ENCODE measurements at regions of chr12 and their contacts with region 1.

Region 1: DNA sequence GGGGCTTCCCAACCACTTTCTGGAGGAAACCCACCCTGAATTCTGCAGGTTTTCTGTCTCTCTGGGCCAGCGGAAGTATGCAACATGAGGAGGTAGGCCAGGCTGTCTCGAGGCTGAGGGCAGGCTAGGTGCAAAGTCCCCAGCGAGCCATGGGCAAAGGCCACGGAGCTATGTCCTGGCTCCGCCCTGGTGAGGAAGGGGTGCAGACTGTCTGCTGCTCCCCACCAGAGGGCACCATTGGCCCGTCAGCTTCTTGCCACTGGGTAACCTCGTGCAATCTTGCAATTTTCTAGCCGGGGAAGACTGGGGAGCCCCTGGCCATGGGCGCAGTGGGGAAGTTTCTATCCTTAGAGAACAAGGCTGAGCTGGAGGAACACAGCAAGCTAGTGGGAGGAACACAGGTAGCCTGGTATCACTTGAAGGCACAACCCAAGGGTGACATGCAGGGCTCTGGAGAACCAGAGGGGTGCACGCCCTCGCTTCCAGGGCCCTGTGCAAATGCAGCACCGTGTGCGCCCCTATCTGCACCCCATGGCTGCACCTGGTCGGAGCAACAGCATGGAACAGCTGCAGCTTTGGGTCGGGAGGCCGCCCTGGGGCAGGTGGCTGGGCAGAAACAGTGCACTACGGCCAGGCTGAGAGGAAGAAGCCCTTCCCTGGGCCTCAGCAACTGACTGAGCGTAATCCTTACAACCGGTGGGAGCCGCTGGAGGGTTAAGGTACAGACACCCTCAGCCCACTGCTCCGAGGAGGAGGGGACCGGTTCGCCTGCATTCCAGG is 27.6 kb upstream of the RPLP0 start:
- DNase-seq: peak; percentile 92 to 93
- ATAC-seq: peak; percentile 53

Region 2: DNA sequence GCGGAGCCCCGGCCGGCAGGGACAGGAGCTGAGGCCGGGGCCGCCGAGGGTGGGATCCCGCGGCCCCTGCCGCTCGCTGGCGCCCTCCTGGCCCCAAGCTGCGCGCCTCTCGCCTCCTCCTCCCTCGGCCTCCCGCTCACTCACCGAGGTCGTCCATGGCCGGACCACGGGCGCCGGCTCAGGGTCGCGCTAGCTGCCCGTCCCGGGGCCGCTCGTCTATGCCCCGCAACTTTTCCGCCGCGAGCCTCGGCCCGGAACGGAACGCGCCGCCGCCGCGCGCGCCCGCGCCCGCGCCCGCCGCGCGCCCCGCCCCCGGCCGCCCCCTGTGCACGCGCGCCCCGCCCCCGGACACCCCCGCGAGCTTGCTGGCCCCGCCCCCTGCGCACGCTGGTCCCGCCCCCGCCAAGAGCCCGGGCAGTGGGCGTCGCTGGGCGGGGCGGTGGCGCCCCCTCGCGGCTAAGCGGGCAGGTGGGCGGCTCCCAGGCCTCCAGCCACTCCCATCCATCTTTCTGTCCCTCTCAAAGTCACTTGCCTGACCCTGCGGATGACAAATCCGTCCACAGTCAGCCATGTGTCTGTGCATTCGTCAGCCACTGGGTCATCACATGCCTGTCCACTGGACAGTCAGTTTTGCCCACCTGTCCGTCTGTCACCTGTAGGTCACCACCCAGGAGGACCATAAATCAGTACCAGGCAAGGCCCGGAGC is 37.1 kb after region 1 on chr12 and contains the start of gene PXN:
- intact Hi-C with region 1: loop called (anchors 2 to 5 kb)
- DNase-seq: peak; percentile 79 to 91
- ATAC-seq: peak; percentile 84
- total RNA-seq, gene PXN: 161 to 164 TPM